Activated CD4-positive, alpha-beta memory T cell treated with anti-CD3 and anti-CD28 coated beads, Interleukin-2, amount 10 ng/mL, durations not matched to agents 7 days and 5 days (primary cell): ENCODE measurements at regions of chr19 and their contacts with region 1.

Region 1: DNA sequence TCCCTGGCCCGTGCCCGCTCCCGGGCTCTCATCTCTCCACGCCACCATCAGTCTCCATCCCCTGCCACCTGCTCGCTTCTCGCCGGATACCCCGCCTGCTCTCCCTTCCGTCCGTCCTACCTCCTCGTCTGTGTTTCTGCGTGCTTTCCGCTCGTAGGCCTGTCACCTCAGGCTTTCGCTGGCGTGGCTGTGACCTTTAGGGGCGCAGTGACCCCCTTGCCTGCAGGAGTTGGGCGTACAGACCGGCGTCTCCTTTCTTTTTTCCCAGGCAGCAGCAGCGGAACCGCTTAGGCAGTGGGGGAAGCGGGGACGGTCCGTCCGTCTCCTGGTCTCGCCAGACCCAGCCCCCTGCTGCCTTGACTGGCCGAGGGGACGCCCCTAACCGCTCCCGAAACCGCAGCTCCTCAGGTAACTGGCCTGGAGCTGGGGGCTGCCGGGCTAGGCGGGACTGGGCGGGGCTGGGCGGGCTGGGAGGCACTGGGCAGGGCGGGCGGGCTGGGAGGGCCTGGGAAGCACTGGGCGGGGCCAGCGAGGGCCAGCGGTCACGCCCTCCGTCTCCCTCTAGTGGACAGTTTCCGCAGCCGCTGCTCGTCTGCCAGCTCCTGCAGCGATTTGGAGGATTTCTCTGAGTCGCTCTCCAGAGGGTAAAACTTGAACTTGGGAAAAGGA is 6.3 kb downstream of the PGLYRP1 start:
- DNase-seq: peak; percentile 84
- H3K4me3 Mint-ChIP-seq: peak overlapping the region; percentile 77
- H3K27ac Mint-ChIP-seq: peak overlapping the region; percentile 37
- H3K4me1 Mint-ChIP-seq: peaks cover 18% of the 10 kb centered on the region
- H3K27me3 Mint-ChIP-seq: peaks cover 15% of the 10 kb centered on the region

Region 2: DNA sequence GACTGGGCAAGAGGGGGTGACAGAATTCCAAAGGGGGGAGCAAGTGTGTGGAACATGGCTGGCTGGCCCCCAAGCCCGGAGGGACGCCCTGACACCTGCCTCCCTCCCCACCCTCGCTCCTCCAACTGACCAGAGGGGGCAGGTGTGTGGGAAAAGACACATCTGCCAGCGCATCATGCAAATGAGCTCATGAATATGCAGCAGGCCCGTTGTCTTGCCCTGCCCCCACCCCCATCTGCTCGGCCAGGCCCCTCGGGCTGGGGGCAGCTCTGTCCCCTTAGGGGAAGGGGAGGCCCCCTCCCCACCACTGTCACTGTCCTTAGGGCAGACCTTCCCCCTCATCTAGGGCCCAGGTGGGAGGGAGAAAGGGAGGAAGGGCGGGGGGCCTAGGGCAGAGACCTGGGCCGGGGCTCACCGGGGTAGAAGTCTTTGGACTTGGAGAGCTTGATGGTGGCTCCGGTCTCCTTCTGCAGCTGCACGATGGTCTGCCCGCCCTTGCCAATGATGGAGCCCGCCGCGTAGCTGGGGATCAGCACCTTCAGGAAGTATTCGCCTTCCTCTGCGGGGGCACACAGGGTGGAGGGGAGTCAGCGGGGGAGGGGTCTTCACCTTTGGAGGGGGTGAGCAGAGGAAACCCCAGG is 55.8 kb before region 1 on chr19:
- CTCF ChIA-PET with region 1: no interaction called
- POLR2A ChIA-PET with region 1: no interaction called
- DNase-seq: no peak
- H3K4me3 Mint-ChIP-seq: no peak overlapping the region
- H3K27ac Mint-ChIP-seq: no peak overlapping the region
- H3K4me1 Mint-ChIP-seq: peaks cover 3% of the 10 kb centered on the region
- H3K27me3 Mint-ChIP-seq: peaks cover 48% of the 10 kb centered on the region

Region 3: DNA sequence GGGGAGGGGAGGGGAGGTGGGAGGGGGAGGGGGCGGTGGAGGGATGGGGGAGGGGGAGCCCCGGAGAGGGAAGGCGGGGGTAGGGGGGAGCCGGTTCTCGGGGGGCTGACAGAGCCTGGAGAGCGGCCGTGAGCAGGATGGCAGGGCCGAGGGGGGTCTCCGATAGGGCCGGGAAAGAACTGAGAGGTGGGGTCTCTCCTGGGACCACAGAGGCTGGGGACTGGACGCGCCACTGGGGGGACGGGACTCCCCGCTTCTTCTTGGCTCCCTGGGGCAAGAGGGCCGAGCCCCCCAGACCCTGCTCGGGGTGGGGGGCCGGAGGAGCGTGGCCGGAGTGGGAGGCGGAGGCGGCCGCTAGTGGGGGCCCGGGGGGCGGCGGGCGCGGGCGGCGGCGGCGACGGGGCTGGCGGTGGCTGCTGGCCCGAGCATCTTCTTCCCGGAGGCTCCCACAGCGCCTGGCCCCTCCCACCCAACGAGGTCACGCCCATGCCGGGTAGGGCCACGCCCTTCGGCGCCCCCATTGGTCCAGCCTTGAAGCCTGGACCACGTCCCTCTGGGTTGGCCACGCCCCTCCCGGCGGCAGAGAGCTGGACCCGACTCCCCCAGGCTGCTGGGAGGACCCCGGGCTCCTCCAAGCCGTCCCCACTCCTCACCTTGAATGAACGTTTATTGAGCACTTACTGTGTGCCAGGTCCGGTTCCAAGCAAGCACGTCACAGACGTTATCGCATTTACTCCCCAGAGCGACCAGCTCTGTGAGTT is 42.8 kb before region 1 on chr19 and contains the start of gene NOVA2:
- CTCF ChIA-PET with region 1: no interaction called
- POLR2A ChIA-PET with region 1: no interaction called
- DNase-seq: peak; percentile 55
- H3K4me3 Mint-ChIP-seq: no peak within 1 kb of the TSS
- H3K27ac Mint-ChIP-seq: no peak within 1 kb of the TSS
- H3K4me1 Mint-ChIP-seq: peaks cover 19% of the 10 kb centered on the region
- H3K27me3 Mint-ChIP-seq: peaks cover 62% of the 10 kb centered on the region
- total RNA-seq, gene NOVA2: 0.15 to 0.30 TPM

Region 4: DNA sequence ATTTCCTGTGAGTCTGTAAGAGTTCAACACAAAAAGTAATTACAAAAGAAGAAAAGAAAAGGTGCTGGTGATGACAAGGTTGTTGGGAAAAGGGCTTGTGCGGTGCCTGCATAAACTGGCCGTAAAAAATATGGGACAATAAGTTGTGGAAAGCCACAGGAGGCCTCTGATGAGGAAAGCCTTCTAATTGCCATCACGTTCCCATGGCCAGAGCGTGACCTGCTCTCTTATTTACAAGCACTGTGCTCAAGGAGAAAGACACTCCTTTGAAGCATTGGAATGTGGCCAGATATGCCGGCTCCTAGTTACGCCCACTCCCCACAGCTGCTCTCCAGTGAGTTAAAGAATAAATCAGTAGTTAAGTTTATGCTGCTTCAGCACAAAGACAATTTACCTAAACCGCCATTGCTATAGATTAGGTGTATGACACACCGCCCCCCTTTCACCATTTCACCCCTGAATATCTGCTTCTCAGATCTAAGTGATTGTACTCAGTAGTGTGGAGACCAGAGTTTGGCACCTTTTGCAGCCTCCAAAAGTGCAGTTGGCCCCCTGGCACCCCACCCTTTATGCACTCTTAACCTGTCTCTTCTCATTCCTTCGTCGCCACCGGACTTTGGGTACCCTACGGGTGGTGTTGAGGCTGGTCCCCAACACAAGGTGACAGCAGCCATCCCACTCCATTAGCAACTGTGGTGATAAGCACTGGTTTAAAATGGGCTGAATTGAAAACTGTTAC is 14.4 kb after region 1 on chr19:
- CTCF ChIA-PET with region 1: interaction called, 13 read pairs
- POLR2A ChIA-PET with region 1: interaction called, 5 read pairs
- DNase-seq: no peak
- H3K4me3 Mint-ChIP-seq: no peak overlapping the region
- H3K27ac Mint-ChIP-seq: no peak overlapping the region
- H3K4me1 Mint-ChIP-seq: peaks cover 10% of the 10 kb centered on the region
- H3K27me3 Mint-ChIP-seq: peaks cover 20% of the 10 kb centered on the region